ENCODE measurements at regions of chr1 and their contacts with region 1.

Region 1: DNA sequence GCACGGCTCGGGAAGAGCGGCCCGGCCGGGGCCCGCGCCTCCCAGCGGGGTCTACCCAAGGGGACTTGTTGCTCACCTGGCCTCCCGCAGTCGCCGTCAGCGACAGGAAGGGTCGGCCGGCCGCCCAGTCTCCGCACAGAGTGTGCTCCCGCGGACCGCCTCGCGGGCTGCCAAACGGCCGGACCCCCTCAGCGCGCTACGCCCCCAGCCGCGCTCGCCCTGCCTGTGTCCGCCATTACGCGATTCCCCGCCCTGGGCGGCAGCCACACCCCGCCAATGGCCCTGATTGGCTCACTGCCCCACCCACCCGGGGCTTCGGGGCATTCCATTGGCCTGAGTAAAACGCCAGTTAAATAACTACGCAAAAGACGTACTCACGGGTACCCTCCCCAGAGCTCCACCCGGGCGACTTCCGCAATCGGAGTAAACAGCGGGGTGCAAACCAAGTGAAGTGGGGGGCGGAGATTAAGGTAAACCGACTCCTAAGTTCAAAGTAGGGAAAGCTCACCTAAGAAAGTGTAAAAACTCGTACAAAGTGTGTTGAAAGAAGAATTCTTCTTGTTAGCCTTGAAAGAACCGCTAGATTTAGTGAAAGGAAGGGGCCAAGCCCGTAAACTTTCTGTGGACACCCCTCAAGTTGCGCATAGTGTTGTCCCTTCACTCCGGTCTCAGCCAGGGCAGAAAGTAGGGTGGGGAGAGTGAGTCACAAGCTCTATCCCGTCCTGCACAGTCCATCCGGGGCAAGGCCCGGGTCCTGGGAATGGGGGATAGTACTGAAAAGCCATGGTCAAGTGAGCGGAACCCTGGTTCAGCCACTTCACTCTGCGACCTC is at the start of gene WASF2:
- DNase-seq: peak; percentile 98
- ATAC-seq: peak; percentile 90
- H3K4me3 ChIP-seq: peak within 1 kb of the TSS; percentile 78 to 100 (median 99)
- H3K4me3 Mint-ChIP-seq: peak within 1 kb of the TSS; percentile 99
- H3K27ac ChIP-seq: peak within 1 kb of the TSS; percentile 89 to 95
- H3K27ac Mint-ChIP-seq: peak within 1 kb of the TSS; percentile 99
- H3K4me1 ChIP-seq: peaks cover 44 to 58% of the 10 kb centered on the region in 2 donors
- H3K4me1 Mint-ChIP-seq: peaks cover 57% of the 10 kb centered on the region
- H3K27me3 ChIP-seq: no peaks in the 10 kb centered on the region
- H3K27me3 Mint-ChIP-seq: no peaks in the 10 kb centered on the region
- CTCF ChIP-seq: no peak
- total RNA-seq, gene WASF2: 166 and 169 TPM in 2 replicates

Region 2: GRCh38 chr1:27402349-27402754 is 87.8 kb before region 1 on chr1:
- CTCF ChIA-PET with region 1: interaction called, 13 read pairs
- POLR2A ChIA-PET with region 1: interaction called, 3 read pairs
- intact Hi-C with region 1: no loop called
- DNase-seq: peak; percentile 54
- ATAC-seq: no peak
- H3K4me3 ChIP-seq: no peak overlapping the region
- H3K4me3 Mint-ChIP-seq: peak overlapping the region; percentile 72
- H3K27ac ChIP-seq: peak overlapping the region; percentile 49 to 79
- H3K27ac Mint-ChIP-seq: peak overlapping the region; percentile 89
- H3K4me1 ChIP-seq: peaks cover 41 to 59% of the 10 kb centered on the region in 2 donors
- H3K4me1 Mint-ChIP-seq: peaks cover 58% of the 10 kb centered on the region
- H3K27me3 ChIP-seq: no peaks in the 10 kb centered on the region
- H3K27me3 Mint-ChIP-seq: no peaks in the 10 kb centered on the region
- CTCF ChIP-seq: no peak

Region 3: DNA sequence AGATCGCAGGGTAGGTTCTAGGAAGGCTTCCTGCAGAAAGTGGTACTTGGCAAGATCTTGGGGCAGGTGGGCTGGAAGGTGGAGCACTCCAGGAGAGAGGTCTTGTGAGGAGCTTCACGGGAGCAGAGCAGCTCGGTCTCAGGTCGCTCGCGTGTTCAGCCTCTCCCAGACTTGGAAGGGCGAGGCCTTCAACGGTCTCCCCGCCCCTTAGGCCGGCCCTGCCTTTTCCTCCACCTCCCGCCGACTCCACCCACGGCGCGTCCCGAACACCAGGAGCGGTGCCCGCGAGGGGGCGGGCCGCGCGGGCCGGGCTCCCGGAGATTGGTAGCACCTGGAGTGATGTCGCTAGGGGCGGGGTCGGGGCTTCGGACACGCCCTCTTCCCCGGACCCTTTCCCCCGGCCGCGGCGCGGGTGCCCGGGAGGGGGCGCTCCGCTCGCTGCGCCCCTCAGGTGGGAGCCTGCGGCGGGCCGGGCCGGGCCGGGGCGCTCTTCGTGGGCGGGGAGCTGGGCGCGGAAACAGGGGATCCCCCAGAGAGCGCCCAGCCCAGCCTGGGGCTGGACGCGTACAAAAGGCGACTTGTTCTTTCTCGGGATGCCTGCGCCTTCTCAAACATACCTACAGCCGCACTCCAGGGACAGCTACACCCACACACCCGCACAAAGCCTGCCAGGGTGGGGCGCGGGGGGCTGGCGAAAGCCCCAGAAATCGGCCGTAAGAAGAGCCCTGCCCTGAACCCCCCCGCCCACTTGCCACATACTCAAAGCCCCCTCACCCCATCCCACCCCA is 78.4 kb after region 1 on chr1:
- CTCF ChIA-PET with region 1: interaction called, 3 read pairs
- POLR2A ChIA-PET with region 1: interaction called, 4 read pairs
- intact Hi-C with region 1: loop called (anchors 1 kb)
- DNase-seq: peak; percentile 95
- ATAC-seq: peak; percentile 92
- H3K4me3 ChIP-seq: peak overlapping the region in 4 of 5 experiments; percentile 25 to 69 (median 50)
- H3K4me3 Mint-ChIP-seq: peak overlapping the region; percentile 86
- H3K27ac ChIP-seq: peak overlapping the region; percentile 27 to 68
- H3K27ac Mint-ChIP-seq: peak overlapping the region; percentile 69
- H3K4me1 ChIP-seq: peaks cover 15 to 38% of the 10 kb centered on the region in 2 donors
- H3K4me1 Mint-ChIP-seq: peaks cover 40% of the 10 kb centered on the region
- H3K27me3 ChIP-seq: no peaks in the 10 kb centered on the region
- H3K27me3 Mint-ChIP-seq: no peaks in the 10 kb centered on the region
- CTCF ChIP-seq: peak; percentile 82